Lower leg skin (tissue), 4 donors: ENCODE measurements at regions of chr2 and their contacts with region 1.

Region 1: DNA sequence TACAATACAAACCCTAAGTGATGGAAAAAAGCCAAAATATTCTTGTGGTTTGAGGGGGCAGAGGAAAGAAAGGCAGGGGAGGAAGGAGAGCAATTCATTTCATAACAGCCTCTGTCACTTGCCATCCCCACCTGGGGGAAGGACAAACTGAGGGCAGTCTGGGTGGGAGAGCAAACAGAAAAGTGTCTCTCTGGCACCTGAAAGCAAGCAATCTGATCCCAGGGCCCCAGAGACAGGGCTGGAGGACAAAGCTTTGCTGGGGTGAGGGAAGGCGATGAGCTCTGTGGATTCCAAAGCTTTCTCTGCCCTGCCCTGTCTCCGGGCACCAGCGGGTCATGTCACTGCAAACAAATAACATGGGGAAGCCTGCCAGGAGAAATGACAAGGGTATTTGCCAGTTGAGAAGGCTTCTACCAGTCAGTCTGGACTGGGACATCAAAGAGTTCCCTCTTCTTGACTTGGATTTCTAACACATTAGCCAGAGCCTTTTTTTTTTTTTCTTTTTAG is 528.1 kb upstream of the TNP1 start:
- DNase-seq: no peak
- H3K4me3 ChIP-seq: no peak overlapping the region
- CTCF ChIP-seq: no peak
- POLR2A ChIP-seq: no peak

Region 2: DNA sequence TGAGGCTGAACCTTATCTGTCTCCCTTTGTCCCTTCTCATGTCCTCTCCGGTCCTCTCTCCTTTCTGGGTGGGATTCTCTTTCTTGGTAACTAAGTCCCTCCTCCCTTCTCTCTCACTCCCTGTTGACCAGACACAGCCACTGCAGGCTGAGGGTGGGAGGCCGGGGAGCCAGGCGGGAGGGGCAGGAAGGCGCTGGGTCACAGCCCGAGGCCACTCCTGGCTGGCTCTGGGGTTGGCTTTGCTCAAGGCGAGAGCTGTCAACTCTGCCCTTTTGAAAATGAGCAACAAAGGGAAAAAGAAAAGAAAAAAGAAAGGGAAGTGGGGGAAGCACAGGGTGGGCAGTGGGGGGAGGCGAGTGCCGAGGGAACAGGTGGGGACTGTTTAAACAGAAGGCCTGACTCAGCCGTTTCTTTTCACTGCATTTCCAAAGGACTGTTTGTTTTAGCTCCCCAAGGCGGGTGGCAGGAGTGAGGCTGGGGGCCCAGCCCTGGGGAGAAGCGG is 622.2 kb before region 1 on chr2:
- intact Hi-C with region 1: no loop called
- DNase-seq: no peak
- H3K4me3 ChIP-seq: no peak overlapping the region
- CTCF ChIP-seq: no peak
- POLR2A ChIP-seq: no peak

Region 3: DNA sequence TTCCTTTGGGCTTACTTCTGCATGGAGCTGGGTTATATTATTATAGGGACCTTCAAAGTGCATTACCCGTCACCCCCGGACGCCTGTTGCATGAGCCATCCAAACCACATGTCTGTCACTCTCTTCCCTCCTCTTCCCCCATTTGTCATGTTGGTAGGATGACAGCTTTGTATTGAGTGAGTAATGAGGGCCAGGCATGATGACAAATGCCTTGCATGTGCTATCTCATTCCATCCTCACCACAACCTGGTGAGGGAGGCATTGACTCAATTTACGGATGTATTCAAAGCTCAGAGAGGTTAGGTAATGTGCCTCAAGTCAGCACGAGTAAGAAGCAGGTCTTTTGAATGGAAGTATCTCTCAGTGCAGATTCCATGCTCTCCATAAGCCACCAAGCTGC is 17.6 kb before region 1 on chr2:
- intact Hi-C with region 1: no loop called
- DNase-seq: no peak
- H3K4me3 ChIP-seq: no peak overlapping the region
- CTCF ChIP-seq: no peak
- POLR2A ChIP-seq: no peak

Region 4: GRCh38 chr2:217459680-217460405 is 71.9 kb after region 1 on chr2:
- intact Hi-C with region 1: loop called (anchors 10 kb)
- DNase-seq: no peak
- H3K4me3 ChIP-seq: no peak overlapping the region
- CTCF ChIP-seq: no peak
- POLR2A ChIP-seq: no peak